Activated T-helper 1 cell treated with anti-CD3 and anti-CD28 coated beads, Interleukin-12 subunit alpha, Interleukin-12 subunit beta, Interleukin-2, Interleukin-4 antibody, amounts not matched to agents 30 ng/mL and 10 ng/mL and 1 ng/mL, durations not matched to agents 14 hours and 24 hours and 36 hours (primary cell): ENCODE measurements at regions of chr4 and their contacts with region 1.

Region 1: GRCh38 chr4:174222266-174222872 is 61.1 kb downstream of the FBXO8 start:
- DNase-seq: no peak
- H3K4me3 Mint-ChIP-seq: no peak overlapping the region
- H3K27ac Mint-ChIP-seq: no peak overlapping the region
- H3K4me1 Mint-ChIP-seq: peaks cover 11% of the 10 kb centered on the region
- H3K27me3 Mint-ChIP-seq: peaks cover 56% of the 10 kb centered on the region

Region 2: GRCh38 chr4:173516621-173517524 is 705.5 kb before region 1 on chr4:
- intact Hi-C with region 1: loop called (anchors 5 kb)
- DNase-seq: no peak
- H3K4me3 Mint-ChIP-seq: no peak overlapping the region
- H3K27ac Mint-ChIP-seq: peak overlapping the region; percentile 73
- H3K4me1 Mint-ChIP-seq: no peaks in the 10 kb centered on the region
- H3K27me3 Mint-ChIP-seq: peaks cover 84% of the 10 kb centered on the region

Region 3: GRCh38 chr4:174318829-174319764 is 96.7 kb after region 1 on chr4:
- intact Hi-C with region 1: loop called (anchors 1 kb)
- DNase-seq: no peak
- H3K4me3 Mint-ChIP-seq: no peak overlapping the region
- H3K27ac Mint-ChIP-seq: no peak overlapping the region
- H3K4me1 Mint-ChIP-seq: no peaks in the 10 kb centered on the region
- H3K27me3 Mint-ChIP-seq: no peaks in the 10 kb centered on the region

Region 4: DNA sequence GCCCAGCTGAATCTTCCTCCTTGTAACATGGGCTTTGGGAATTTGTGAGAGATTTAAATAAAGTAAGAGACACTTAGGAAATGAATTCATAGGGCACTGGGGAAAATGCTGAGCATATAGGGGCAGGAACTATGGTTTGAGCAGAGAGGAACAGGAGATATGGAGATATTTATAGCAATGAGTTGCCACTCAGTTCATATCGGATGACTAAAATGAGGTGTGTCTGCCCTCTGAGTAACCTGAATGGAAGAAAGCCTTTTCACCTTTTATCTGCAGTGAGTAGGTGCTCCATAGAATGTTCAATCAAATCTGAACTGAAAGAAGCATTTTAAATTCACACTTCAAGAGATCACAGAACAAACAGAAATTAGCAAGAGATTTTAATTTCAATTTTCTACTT is 167.1 kb after region 1 on chr4:
- intact Hi-C with region 1: no loop called
- DNase-seq: no peak
- H3K4me3 Mint-ChIP-seq: no peak overlapping the region
- H3K27ac Mint-ChIP-seq: no peak overlapping the region
- H3K4me1 Mint-ChIP-seq: no peaks in the 10 kb centered on the region
- H3K27me3 Mint-ChIP-seq: peaks cover 4% of the 10 kb centered on the region